Natural killer cell (primary cell): ENCODE measurements at regions of chr2 and their contacts with region 1.

Region 1: DNA sequence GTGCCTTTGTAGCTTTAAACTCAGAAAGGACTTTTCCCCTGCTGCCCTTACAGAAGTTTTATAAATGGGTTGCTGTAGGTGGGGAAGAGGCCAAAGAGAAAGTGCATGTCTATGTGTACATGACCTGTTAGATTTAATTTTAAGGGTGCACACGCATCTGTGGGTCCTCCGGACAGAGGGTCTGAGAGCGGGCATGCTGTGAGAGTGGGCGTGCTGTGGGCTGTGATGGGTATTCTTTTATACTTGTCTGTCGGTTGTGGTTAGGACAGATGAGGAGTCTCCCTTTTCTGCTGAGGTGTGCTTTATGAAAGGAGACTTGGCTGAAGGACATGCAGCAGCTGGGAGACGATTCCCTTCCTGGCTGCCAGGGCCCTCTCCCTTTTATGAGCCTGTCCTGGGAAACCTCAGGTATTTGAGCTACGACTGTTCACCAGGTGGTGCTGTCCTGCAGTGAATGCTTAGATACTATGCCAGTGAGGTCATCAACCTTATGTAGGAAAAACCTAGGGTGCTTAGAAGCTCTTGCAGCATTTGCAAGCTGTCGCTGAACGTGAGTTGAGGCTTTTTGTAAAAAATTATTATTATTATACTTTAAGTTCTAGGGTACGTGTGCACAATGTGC is 67.5 kb downstream of the TANC1 start:
- DNase-seq: peak in 1 of 2 donors; percentile 58
- ATAC-seq: peak in 1 of 3 donors; percentile 52
- H3K4me3 ChIP-seq: no peak overlapping the region
- H3K4me3 Mint-ChIP-seq: no peak overlapping the region
- H3K27ac ChIP-seq: no peak overlapping the region
- H3K27ac Mint-ChIP-seq: no peak overlapping the region
- H3K4me1 ChIP-seq: no peaks in the 10 kb centered on the region
- H3K4me1 Mint-ChIP-seq: no peaks in the 10 kb centered on the region
- H3K27me3 ChIP-seq: no peaks in the 10 kb centered on the region
- H3K27me3 Mint-ChIP-seq: peaks cover 9 to 10% of the 10 kb centered on the region in 2 donors
- CTCF ChIP-seq: no peak

Region 2: GRCh38 chr2:159185401-159186130 is 149.7 kb after region 1 on chr2:
- intact Hi-C with region 1: loop called (anchors 1 kb)
- DNase-seq: peak in 1 of 2 donors; percentile 59
- ATAC-seq: peak; percentile 65 to 93 (median 87)
- H3K4me3 ChIP-seq: no peak overlapping the region
- H3K4me3 Mint-ChIP-seq: no peak overlapping the region
- H3K27ac ChIP-seq: no peak overlapping the region
- H3K27ac Mint-ChIP-seq: peak overlapping the region in 1 of 2 donors; percentile 49
- H3K4me1 ChIP-seq: peaks cover 10% of the 10 kb centered on the region
- H3K4me1 Mint-ChIP-seq: peaks cover 18 to 32% of the 10 kb centered on the region in 2 donors
- H3K27me3 ChIP-seq: no peaks in the 10 kb centered on the region
- H3K27me3 Mint-ChIP-seq: peaks cover 0 to 3% of the 10 kb centered on the region in 2 donors
- CTCF ChIP-seq: peak; percentile 52